ENCODE measurements at regions of chr12 and their contacts with region 1.

Region 1: GRCh38 chr12:104456417-104456949 is at the start of gene CHST11:
- DNase-seq: peak; percentile 77
- H3K4me3 Mint-ChIP-seq: peak within 1 kb of the TSS; percentile 99
- H3K27ac Mint-ChIP-seq: peak within 1 kb of the TSS; percentile 99
- H3K4me1 Mint-ChIP-seq: peaks cover 43% of the 10 kb centered on the region
- H3K27me3 Mint-ChIP-seq: no peaks in the 10 kb centered on the region
- total RNA-seq, gene CHST11: 69.8 and 70.7 TPM in 2 replicates

Region 2: GRCh38 chr12:104215638-104216297 is 240.7 kb before region 1 on chr12 and contains the start of gene TXNRD1:
- intact Hi-C with region 1: loop called (anchors 5 kb)
- DNase-seq: peak; percentile 79
- H3K4me3 Mint-ChIP-seq: peak within 1 kb of the TSS; percentile 82
- H3K27ac Mint-ChIP-seq: peak within 1 kb of the TSS; percentile 55
- H3K4me1 Mint-ChIP-seq: peaks cover 44% of the 10 kb centered on the region
- H3K27me3 Mint-ChIP-seq: peaks cover 6% of the 10 kb centered on the region
- total RNA-seq, gene TXNRD1: 93.3 and 103 TPM in 2 replicates

Region 3: DNA sequence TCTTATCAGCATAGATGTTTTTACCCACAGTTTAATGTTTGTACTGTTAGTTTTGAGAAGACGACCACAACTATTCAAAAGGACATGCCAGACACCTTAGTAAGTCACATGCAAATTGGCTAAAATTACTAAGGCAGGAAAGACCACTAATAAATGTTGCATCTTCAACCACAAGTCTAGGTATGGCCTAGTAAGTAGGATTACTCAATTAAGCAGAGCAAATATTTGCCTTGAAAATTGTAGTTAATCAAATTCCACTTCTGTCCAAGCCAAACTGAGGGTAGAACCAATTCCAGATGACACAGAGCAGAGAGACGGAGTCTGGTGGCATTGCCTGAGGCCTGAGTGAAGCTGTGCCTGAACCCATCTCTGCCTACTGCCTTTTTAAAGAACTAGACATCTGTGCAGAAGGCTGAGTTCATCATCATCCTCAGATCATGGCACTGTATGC is 29.4 kb before region 1 on chr12:
- intact Hi-C with region 1: loop called (anchors 1 kb)
- DNase-seq: no peak
- H3K4me3 Mint-ChIP-seq: no peak overlapping the region
- H3K27ac Mint-ChIP-seq: peak overlapping the region; percentile 46
- H3K4me1 Mint-ChIP-seq: peaks cover 24% of the 10 kb centered on the region
- H3K27me3 Mint-ChIP-seq: peaks cover 4% of the 10 kb centered on the region

Region 4: DNA sequence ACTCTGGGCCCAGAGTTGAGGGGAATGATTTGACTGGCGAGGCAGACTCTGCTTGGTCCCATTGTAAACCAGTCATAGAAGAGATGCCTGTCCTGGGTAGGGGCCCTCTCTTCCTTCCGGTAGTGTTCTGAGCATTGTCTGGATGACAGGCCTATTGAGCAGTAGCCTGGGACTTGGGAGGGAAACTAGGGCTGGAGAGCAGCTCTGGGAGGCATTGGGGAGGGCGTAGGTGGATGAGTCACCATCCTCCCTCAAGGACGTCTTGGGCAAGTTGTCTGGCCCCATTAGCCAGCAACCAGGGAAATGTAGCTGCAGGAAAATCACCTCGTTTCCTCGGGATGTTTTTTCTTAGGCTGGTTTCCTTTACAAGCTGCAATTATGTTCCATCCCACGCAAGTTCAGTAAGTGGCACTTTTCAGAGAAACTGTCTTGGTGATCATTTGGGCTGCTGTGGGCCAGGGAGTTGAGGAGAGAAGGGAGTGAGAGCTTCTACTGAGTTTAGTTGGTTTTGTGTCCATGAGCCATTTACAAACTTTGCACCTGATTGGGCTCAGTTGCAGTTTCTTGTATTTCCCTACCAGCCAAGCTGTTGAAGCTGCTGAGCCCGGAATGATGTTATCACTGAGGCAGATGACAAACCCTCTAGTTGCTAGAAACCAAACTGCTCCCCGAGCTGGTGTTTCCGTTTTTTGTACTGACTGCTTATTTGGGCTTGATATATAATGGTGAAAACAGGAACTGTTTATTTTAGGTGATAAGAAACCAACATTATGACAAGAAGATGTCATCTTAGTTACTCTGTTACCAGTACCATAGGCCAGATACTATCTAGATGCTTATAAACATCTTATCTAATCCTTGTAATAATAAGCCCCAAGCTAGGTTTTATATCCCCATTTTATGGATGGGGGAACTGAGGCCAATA is 147.8 kb after region 1 on chr12:
- intact Hi-C with region 1: loop called (anchors 1 kb)
- DNase-seq: peak; percentile 34
- H3K4me3 Mint-ChIP-seq: peak overlapping the region; percentile 62
- H3K27ac Mint-ChIP-seq: peak overlapping the region; percentile 88
- H3K4me1 Mint-ChIP-seq: peaks cover 66% of the 10 kb centered on the region
- H3K27me3 Mint-ChIP-seq: no peaks in the 10 kb centered on the region

Region 5: DNA sequence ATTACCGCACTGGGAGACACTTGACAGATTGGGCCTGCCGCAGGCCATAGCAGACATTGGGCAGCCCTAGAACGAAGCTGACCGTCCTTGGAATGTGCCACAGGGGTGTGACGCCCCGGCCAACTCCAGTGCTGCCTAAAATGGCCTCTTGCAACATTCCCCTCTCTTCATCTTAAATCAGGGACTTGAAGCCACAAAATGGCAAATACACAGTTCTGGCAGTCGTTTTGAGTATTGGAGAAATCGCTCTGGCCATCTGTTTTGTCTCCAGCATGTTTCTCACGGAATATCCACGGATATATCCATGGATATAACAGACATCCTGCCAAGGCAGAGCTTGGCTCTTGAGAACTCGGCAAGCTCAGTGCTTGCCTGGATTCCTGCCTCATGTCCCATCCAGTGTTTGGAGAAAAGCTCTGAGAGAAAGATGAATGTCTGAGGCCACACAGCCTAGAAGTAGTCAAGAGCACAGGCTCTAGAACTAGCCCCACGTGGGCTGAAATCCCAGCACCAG is 158.6 kb after region 1 on chr12:
- intact Hi-C with region 1: no loop called
- DNase-seq: no peak
- H3K4me3 Mint-ChIP-seq: no peak overlapping the region
- H3K27ac Mint-ChIP-seq: no peak overlapping the region
- H3K4me1 Mint-ChIP-seq: peaks cover 25% of the 10 kb centered on the region
- H3K27me3 Mint-ChIP-seq: no peaks in the 10 kb centered on the region

Region 6: GRCh38 chr12:104695453-104696148 is 239.1 kb after region 1 on chr12:
- intact Hi-C with region 1: loop called (anchors 1 kb)
- DNase-seq: peak; percentile 70
- H3K4me3 Mint-ChIP-seq: peak overlapping the region; percentile 53
- H3K27ac Mint-ChIP-seq: peak overlapping the region; percentile 94
- H3K4me1 Mint-ChIP-seq: peaks cover 84% of the 10 kb centered on the region
- H3K27me3 Mint-ChIP-seq: no peaks in the 10 kb centered on the region

Region 7: GRCh38 chr12:104877123-104877705 is 420.7 kb after region 1 on chr12:
- intact Hi-C with region 1: loop called (anchors 10 kb)
- DNase-seq: no peak
- H3K4me3 Mint-ChIP-seq: no peak overlapping the region
- H3K27ac Mint-ChIP-seq: no peak overlapping the region
- H3K4me1 Mint-ChIP-seq: peaks cover 21% of the 10 kb centered on the region
- H3K27me3 Mint-ChIP-seq: peaks cover 2% of the 10 kb centered on the region

Region 8: DNA sequence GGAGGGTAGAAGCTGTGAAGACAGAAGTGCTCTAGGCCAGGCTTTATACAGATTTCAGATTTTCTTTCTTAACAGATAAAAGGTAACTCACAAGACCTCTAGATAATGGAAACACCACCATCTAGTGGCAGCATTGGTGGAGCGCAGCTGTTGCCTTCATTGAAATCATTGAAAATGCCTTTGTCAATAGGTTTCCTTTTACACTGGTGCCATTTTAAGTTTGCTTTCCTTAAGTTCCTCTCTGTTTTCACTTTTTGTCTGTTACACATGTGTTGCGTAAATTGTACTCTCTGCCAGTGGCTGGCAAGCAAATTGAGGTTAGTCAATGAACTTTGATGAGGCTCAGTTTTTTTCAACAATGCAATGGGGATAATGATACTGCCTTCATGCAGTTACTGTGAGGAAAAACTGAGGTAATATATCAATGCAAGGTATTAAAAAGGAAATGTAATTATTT is 596.7 kb after region 1 on chr12:
- intact Hi-C with region 1: loop called (anchors 5 kb)
- DNase-seq: peak; percentile 67
- H3K4me3 Mint-ChIP-seq: no peak overlapping the region
- H3K27ac Mint-ChIP-seq: peak overlapping the region; percentile 25
- H3K4me1 Mint-ChIP-seq: peaks cover 15% of the 10 kb centered on the region
- H3K27me3 Mint-ChIP-seq: no peaks in the 10 kb centered on the region